Posterior vena cava (tissue), 2 donors: ENCODE measurements at regions of chr22 and their contacts with region 1.

Region 1: DNA sequence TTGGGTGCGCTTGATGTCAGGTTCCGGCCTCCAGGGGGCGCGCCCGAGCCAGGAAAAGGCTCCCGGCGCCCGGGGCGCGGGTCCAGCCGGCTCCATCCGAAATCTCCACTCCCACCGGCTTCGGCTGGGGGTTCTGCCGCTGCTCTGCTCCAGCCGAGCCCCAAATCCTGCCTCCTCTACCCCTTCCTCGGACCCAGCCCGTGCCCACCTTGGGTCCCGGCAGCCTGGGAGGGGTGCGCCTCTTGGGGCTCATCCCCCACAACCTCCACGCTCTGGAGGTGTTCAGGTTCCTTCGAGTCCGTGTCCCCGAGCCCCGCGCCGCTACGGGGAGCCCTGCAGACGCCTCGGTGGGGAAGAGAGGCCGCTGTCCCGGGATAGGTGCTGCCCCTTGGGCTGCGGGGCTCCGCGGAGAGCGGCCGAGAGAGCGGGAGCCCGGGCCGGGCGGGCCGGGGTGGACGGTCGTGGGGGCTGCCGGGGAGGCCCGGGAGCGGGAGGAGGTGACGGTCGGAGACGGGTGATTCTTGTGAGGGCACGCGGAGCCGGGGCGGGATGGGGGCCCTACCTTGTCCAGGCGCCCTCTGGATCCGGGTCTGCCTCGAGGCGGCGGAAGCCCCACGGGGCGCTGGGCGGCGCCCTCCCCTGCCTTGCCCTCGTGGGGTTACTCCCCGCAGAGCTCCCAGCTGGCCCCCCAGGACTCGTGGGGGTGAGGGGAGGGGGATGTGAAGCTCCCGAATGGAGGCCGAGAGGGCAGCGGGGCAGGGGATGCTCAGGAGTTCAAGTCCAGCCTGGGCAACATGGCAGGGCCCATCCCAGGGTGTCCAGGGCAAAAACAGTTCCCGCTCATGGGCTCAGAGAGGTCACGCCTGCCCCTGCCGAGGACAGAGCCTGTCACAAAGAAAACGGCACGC is 13.2 kb upstream of the CYB5R3 start:
- DNase-seq: peak; percentile 95

Region 2: GRCh38 chr22:42794551-42795510 is 132.5 kb after region 1 on chr22:
- intact Hi-C with region 1: loop called in 1 of 2 experiments (anchors 10 kb)
- DNase-seq: peak; percentile 70